Endothelial cell of umbilical vein (primary cell): ENCODE measurements at regions of chr16 and their contacts with region 1.

Region 1: DNA sequence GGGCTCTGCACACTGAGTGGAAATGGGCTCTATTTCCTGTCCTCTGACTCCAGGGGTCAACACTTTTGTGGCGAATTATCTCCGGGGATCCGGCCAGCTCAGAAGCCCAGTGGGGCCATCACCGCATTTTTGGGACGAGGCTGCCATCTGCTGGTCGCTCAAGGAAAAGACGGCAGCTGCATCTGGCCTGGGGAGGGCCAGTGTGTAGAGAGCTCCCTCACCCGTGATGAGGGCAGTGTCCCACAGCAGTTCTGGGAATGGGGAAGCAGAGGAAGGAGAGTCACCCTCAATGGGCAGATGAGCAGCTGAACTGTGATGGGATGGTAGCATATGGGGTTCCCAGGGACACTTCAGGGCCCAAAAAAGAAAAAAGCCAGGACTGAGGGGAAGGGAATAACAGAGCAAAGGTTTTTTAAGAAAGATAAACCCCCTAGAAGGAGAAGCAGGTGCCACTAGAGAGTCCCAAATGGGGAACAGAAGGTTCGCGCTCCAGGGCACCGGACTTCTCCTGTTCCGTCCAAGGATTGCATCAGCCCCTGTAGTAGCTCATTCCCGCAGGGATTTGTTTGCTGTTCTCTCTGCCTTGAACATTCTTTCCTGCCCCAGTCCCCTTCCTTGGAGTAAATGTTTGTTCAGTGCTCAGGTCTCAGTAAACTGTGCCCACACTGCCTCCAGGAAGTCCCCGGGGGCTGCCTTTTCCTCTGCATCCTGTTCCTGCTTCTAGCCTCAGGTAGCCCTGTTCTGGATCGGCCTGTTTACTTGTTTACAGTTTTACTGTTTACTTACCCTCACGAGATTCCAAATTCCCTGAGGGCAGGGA is 9.3 kb upstream of the ABCC12 start:
- DNase-seq: peak; percentile 56
- H3K4me3 ChIP-seq: no peak overlapping the region
- H3K27ac ChIP-seq: no peak overlapping the region
- H3K4me1 ChIP-seq: peaks cover 2% of the 10 kb centered on the region
- H3K27me3 ChIP-seq: no peaks in the 10 kb centered on the region
- CTCF ChIP-seq: peak; percentile 66 to 88
- POLR2A ChIP-seq: no peak

Region 2: DNA sequence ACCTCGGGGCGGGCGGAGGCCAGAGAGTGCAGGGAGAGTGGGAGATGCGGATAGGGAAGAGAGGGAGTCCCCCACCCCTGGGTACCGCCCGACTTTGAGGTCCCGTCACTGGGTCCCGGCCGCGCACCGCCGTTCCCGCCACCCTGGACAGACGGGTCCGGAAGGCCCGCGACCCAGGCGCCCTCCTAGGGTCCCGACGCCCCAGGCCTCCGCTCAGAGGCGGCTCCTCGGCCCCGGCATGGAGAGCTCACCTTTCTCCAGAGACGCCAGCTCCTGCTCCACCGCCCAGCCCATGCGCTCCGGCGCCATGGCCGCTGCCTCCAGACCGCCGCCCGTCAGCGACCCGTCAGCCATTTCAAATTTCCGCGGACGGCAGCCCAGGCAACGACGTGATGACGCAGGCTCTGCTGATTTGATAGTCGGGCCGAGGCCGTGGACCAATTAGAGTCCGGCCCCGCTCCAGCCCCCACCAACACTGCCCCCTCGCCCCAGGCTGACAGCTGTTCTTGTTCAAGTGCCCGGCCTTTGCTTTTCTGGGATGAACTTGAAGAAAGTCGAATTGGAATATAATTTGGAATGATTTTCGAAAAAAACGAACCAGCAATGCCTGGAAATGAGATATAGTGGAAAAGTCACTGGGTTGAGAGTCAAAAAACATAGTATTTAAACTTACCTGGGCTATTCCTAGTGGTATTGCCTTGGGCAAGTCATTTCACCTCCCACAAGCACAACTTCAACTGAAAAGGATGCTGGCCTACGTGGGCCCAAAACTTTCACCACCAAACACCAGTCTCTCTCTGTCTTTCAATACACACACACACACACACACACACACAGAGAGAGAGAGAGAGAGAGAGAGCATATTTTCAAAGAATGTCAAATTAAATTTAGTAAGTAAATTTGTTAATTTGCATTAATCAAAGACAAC is 1543.8 kb before region 1 on chr16 and contains the start of gene SHCBP1:
- CTCF ChIA-PET with region 1: no interaction called
- POLR2A ChIA-PET with region 1: no interaction called
- dilution Hi-C with region 1: no loop called
- intact Hi-C with region 1: loop called (anchors 10 kb)
- DNase-seq: peak; percentile 88
- H3K4me3 ChIP-seq: peak within 1 kb of the TSS; percentile 76 to 80 (median 77)
- H3K27ac ChIP-seq: peak within 1 kb of the TSS; percentile 62
- H3K4me1 ChIP-seq: peaks cover 5% of the 10 kb centered on the region
- H3K27me3 ChIP-seq: no peaks in the 10 kb centered on the region
- CTCF ChIP-seq: peak in 1 of 2 donors; percentile 3
- POLR2A ChIP-seq: peak; percentile 65
- total RNA-seq, gene SHCBP1: 42.2 and 44.9 TPM in 2 replicates

Region 3: GRCh38 chr16:46947900-46948547 is 1217.1 kb before region 1 on chr16:
- CTCF ChIA-PET with region 1: interaction called, 127 read pairs
- POLR2A ChIA-PET with region 1: interaction called, 3 read pairs
- dilution Hi-C with region 1: no loop called
- intact Hi-C with region 1: loop called (anchors 1 kb)
- DNase-seq: peak; percentile 46
- H3K4me3 ChIP-seq: no peak overlapping the region
- H3K27ac ChIP-seq: no peak overlapping the region
- H3K4me1 ChIP-seq: no peaks in the 10 kb centered on the region
- H3K27me3 ChIP-seq: no peaks in the 10 kb centered on the region
- CTCF ChIP-seq: peak; percentile 28 to 50
- POLR2A ChIP-seq: no peak

Region 4: GRCh38 chr16:47028767-47029377 is 1136.2 kb before region 1 on chr16:
- CTCF ChIA-PET with region 1: interaction called, 10 read pairs
- POLR2A ChIA-PET with region 1: no interaction called
- dilution Hi-C with region 1: no loop called
- intact Hi-C with region 1: no loop called
- DNase-seq: no peak
- H3K4me3 ChIP-seq: no peak overlapping the region
- H3K27ac ChIP-seq: no peak overlapping the region
- H3K4me1 ChIP-seq: no peaks in the 10 kb centered on the region
- H3K27me3 ChIP-seq: no peaks in the 10 kb centered on the region
- CTCF ChIP-seq: no peak
- POLR2A ChIP-seq: no peak

Region 5: GRCh38 chr16:48182979-48183537 is 17.9 kb after region 1 on chr16:
- CTCF ChIA-PET with region 1: interaction called, 19 read pairs
- POLR2A ChIA-PET with region 1: interaction called, 3 read pairs
- dilution Hi-C with region 1: no loop called
- intact Hi-C with region 1: no loop called
- DNase-seq: no peak
- H3K4me3 ChIP-seq: no peak overlapping the region
- H3K27ac ChIP-seq: no peak overlapping the region
- H3K4me1 ChIP-seq: no peaks in the 10 kb centered on the region
- H3K27me3 ChIP-seq: no peaks in the 10 kb centered on the region
- CTCF ChIP-seq: no peak
- POLR2A ChIP-seq: no peak

Region 6: DNA sequence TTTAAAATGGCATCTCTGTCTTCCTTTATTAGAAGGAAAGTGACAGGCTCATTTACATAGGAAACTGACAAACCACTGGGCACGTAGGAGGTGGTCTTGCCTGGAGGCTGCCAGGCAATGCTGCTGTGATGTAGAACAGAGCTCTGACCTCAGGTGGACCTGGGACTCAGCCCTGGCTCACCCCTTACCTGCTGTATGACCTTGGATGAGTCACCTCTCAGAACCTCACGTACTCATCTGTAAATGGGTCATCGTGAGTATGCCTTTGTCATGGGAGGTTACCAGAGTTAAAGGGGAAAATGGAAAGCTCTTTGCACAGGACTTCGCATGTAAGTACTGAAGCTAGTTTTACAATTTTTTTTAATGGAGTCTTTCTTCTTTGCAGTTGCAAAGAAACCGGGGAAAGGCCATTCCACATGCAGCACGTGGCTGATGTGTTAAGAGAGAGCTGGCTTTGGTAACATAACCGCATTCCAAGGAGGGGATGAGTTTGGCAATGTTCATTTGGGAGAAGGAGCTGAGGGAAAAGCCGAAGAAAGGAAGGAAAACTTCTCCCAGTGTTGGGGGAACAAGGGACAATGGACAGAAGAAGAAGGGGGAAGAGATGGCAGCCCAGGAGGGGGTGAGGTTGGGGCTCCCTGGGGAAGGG is 41.6 kb after region 1 on chr16:
- CTCF ChIA-PET with region 1: no interaction called
- POLR2A ChIA-PET with region 1: no interaction called
- dilution Hi-C with region 1: no loop called
- intact Hi-C with region 1: no loop called
- DNase-seq: no peak
- H3K4me3 ChIP-seq: no peak overlapping the region
- H3K27ac ChIP-seq: no peak overlapping the region
- H3K4me1 ChIP-seq: no peaks in the 10 kb centered on the region
- H3K27me3 ChIP-seq: no peaks in the 10 kb centered on the region
- CTCF ChIP-seq: no peak
- POLR2A ChIP-seq: no peak

Region 7: GRCh38 chr16:48256579-48257177 is 91.6 kb after region 1 on chr16:
- CTCF ChIA-PET with region 1: no interaction called
- POLR2A ChIA-PET with region 1: no interaction called
- dilution Hi-C with region 1: no loop called
- intact Hi-C with region 1: no loop called
- DNase-seq: no peak
- H3K4me3 ChIP-seq: no peak overlapping the region
- H3K27ac ChIP-seq: no peak overlapping the region
- H3K4me1 ChIP-seq: no peaks in the 10 kb centered on the region
- H3K27me3 ChIP-seq: no peaks in the 10 kb centered on the region
- CTCF ChIP-seq: no peak
- POLR2A ChIP-seq: no peak

Region 8: GRCh38 chr16:48632137-48632774 is 467.1 kb after region 1 on chr16:
- CTCF ChIA-PET with region 1: interaction called, 22 read pairs
- POLR2A ChIA-PET with region 1: no interaction called
- dilution Hi-C with region 1: no loop called
- intact Hi-C with region 1: loop called (anchors 5 kb)
- DNase-seq: no peak
- H3K4me3 ChIP-seq: no peak overlapping the region
- H3K27ac ChIP-seq: no peak overlapping the region
- H3K4me1 ChIP-seq: no peaks in the 10 kb centered on the region
- H3K27me3 ChIP-seq: no peaks in the 10 kb centered on the region
- CTCF ChIP-seq: no peak
- POLR2A ChIP-seq: no peak